ENCODE measurements at regions of chr15 and their contacts with region 1.

Region 1: GRCh38 chr15:52103217-52104207 is 9.1 kb downstream of the BCL2L10 start:
- DNase-seq: peak; percentile 94
- ATAC-seq: peak; percentile 76
- H3K4me3 ChIP-seq: no peak overlapping the region
- H3K27ac ChIP-seq: no peak overlapping the region
- H3K4me1 ChIP-seq: peaks cover 33% of the 10 kb centered on the region
- H3K27me3 ChIP-seq: no peaks in the 10 kb centered on the region
- CTCF ChIP-seq: no peak
- EP300 ChIP-seq: peak; percentile 59 to 76; a peak in 3 of 4 replicates
- POLR2A ChIP-seq: 0 out of 2 replicates have a peak, but pooled peaks have one; percentile 12
- RAD21 ChIP-seq: peak; percentile 31; the same call in 1 of the 2 replicates

Region 2: GRCh38 chr15:51737280-51738017 is 366.1 kb before region 1 on chr15 and contains the start of gene LYSMD2:
- CTCF ChIA-PET with region 1: interaction called, 4 read pairs
- POLR2A ChIA-PET with region 1: no interaction called
- RAD21 ChIA-PET with region 1: interaction called, 3 read pairs
- SMC1A ChIA-PET with region 1: interaction called, 6 read pairs
- in situ Hi-C with region 1: no loop called
- intact Hi-C with region 1: loop called (anchors 10 kb)
- DNase-seq: no peak
- ATAC-seq: peak; percentile 46
- H3K4me3 ChIP-seq: peak within 1 kb of the TSS; percentile 77
- H3K27ac ChIP-seq: peak within 1 kb of the TSS; percentile 94
- H3K4me1 ChIP-seq: peaks cover 25% of the 10 kb centered on the region
- H3K27me3 ChIP-seq: no peaks in the 10 kb centered on the region
- CTCF ChIP-seq: no peak
- EP300 ChIP-seq: no peak; a peak in 1 of 4 replicates
- POLR2A ChIP-seq: peak; percentile 63
- RAD21 ChIP-seq: no peak
- polyA plus RNA-seq, gene LYSMD2: 30.5 to 61.3 TPM

Region 3: GRCh38 chr15:52018693-52019387 is 84.7 kb before region 1 on chr15 and contains the start of gene MAPK6:
- CTCF ChIA-PET with region 1: no interaction called
- POLR2A ChIA-PET with region 1: interaction called, 9 read pairs
- RAD21 ChIA-PET with region 1: interaction called, 9 read pairs
- SMC1A ChIA-PET with region 1: interaction called, 24 read pairs
- in situ Hi-C with region 1: no loop called
- intact Hi-C with region 1: no loop called
- DNase-seq: peak; percentile 71
- ATAC-seq: peak; percentile 69
- H3K4me3 ChIP-seq: peak within 1 kb of the TSS; percentile 91
- H3K27ac ChIP-seq: peak within 1 kb of the TSS; percentile 99
- H3K4me1 ChIP-seq: peaks cover 15% of the 10 kb centered on the region
- H3K27me3 ChIP-seq: no peaks in the 10 kb centered on the region
- CTCF ChIP-seq: no peak
- EP300 ChIP-seq: peak in 1 of 2 experiments; percentile 61; a peak in 1 of 4 replicates
- POLR2A ChIP-seq: peak; percentile 88
- RAD21 ChIP-seq: no peak
- polyA plus RNA-seq, gene MAPK6: 20.6 to 23.4 TPM

Region 4: DNA sequence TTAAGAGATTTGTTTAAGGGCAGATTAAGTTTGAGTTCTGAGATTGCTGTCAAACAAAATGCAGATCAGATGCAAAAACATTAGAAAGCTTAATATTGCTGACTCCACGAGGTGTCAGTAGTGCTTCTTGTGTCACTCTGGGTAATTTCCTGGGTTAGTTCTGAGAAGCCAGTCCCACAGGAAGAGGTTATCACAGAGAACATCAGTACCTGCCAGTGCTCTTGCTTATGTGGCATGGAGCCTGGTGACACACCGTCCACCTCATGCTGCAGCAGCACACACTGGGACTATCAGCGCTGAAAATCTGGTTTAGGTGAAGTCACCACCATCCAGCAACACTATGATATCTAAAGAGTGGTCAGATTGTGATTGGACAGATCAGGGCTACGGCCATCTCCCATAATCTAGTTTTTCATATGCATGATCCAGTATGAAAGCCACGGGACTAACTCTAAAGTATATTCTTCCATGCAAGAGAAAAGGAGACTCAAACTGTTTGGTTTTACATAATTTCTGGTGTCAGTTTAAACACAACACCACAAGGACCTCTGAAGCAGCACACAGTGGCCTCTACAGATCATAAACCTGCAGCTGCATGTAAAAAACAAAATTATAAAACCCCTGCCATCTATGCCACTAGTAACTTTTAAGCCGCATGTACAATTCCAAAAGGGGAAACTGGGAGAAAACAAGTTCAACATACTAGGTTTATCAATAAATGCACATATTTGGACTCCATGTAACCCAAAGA is 228.2 kb after region 1 on chr15:
- CTCF ChIA-PET with region 1: no interaction called
- POLR2A ChIA-PET with region 1: no interaction called
- RAD21 ChIA-PET with region 1: no interaction called
- SMC1A ChIA-PET with region 1: no interaction called
- in situ Hi-C with region 1: no loop called
- intact Hi-C with region 1: no loop called
- DNase-seq: peak; percentile 87
- ATAC-seq: peak; percentile 99
- H3K4me3 ChIP-seq: no peak overlapping the region
- H3K27ac ChIP-seq: peak overlapping the region; percentile 22
- H3K4me1 ChIP-seq: peaks cover 15% of the 10 kb centered on the region
- H3K27me3 ChIP-seq: no peaks in the 10 kb centered on the region
- CTCF ChIP-seq: peak; percentile 59 to 90 (median 78)
- EP300 ChIP-seq: no peak
- POLR2A ChIP-seq: no peak
- RAD21 ChIP-seq: peak; percentile 96

Measured in GM12878 (cell line).